ENCODE measurements at regions of chr2 and their contacts with region 1.

Region 1: DNA sequence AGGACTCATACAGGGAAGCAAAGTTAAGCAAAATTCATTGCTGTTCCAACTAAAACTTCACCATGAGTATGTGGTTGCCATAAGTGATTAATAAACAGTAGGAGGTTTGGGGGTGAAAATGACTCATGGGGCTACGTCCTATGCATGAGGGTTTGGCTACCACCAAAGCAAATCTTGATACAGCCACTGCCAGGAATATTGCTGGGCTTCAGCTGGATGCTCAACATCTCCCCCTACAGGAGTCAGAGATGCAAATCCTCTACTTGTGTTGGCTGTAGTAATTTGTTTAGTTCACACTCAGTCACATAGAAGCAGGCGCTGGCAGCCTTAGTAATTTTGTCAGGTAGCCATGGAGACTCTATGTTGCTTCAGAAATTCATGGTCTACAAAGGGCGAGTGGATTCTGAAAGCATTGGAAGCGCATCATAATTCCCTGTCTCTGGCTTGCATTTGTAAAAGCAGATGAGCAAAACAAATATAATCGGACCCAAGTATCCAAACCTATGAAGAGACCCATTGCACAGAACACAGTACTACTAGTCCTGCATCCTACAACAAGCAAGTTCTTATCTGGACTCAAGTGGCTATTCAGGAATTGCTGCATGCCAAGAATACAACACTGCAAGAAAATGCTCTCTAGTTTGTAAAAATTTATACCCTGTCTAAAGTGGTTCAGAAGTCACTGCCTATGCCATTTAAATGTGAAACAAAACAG is 76.0 kb downstream of the CD28 start:
- DNase-seq: peak in 8 of 9 donors; percentile 46 to 73 (median 64)
- ATAC-seq: peak; percentile 92
- H3K4me3 ChIP-seq: no peak overlapping the region
- H3K4me3 Mint-ChIP-seq: peak overlapping the region in 6 of 10 donors; percentile 39 to 63 (median 46)
- H3K27ac ChIP-seq: no peak overlapping the region
- H3K27ac Mint-ChIP-seq: peak overlapping the region; percentile 63 to 85 (median 81)
- H3K4me1 ChIP-seq: peaks cover 17 to 26% of the 10 kb centered on the region in 2 donors
- H3K4me1 Mint-ChIP-seq: peaks cover 11 to 64% (median 53%) of the 10 kb centered on the region in 7 donors
- H3K27me3 ChIP-seq: no peaks in the 10 kb centered on the region
- H3K27me3 Mint-ChIP-seq: no peaks in the 10 kb centered on the region

Region 2: GRCh38 chr2:203535078-203535783 is 247.2 kb before region 1 on chr2 and contains the start of gene RAPH1:
- CTCF ChIA-PET with region 1: no interaction called
- POLR2A ChIA-PET with region 1: interaction called, 3 read pairs
- intact Hi-C with region 1: loop called in 1 of 2 experiments (anchors 2 kb)
- DNase-seq: peak; percentile 24 to 72 (median 51)
- ATAC-seq: peak; percentile 77
- H3K4me3 ChIP-seq: peak within 1 kb of the TSS; percentile 71
- H3K4me3 Mint-ChIP-seq: peak within 1 kb of the TSS; percentile 79 to 95 (median 90)
- H3K27ac ChIP-seq: peak within 1 kb of the TSS; percentile 49
- H3K27ac Mint-ChIP-seq: peak within 1 kb of the TSS; percentile 32 to 90 (median 73)
- H3K4me1 ChIP-seq: peaks cover 10 to 15% of the 10 kb centered on the region in 2 donors
- H3K4me1 Mint-ChIP-seq: peaks cover 16 to 30% (median 28%) of the 10 kb centered on the region in 7 donors
- H3K27me3 ChIP-seq: no peaks in the 10 kb centered on the region
- H3K27me3 Mint-ChIP-seq: peaks cover 6 to 75% (median 16%) of the 10 kb centered on the region in 5 donors
- total RNA-seq, gene RAPH1: 1.8 to 5.5 (median 3.0) TPM

Region 3: DNA sequence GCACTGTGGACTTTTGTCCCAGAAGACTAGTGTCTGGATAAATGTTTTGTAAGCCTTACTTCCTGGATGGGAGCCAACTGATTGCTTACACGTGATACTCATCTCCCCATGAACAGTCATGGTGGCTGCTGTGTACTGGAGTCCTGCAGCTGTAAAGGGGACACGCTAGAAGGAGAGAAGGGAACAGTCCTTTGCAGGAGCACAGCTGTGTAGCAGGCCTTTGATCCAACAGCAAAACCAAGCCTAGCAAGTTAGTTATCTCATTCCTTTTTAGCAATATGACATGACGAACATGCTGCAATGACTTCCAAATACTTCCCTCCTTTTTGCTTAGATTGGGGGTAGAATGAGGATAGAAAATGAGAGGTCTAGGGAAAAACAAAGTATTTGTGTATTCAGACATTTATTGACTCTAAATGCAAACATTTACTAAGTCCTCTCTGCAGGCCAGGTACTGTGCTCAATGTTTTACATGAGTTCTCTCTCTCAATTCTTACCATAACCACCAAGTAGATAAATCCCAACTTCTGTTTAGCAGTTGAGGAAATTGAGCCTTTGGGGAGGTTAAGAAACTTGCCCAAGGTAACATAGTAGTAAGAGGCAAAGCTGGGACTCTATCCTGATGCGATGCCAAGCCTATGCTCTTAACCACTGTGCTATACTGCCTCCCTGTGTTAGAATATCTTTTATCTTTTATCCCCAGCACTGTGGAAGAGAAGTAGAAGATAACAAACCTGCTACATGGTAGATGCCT is 131.4 kb before region 1 on chr2:
- CTCF ChIA-PET with region 1: no interaction called
- POLR2A ChIA-PET with region 1: no interaction called
- intact Hi-C with region 1: loop called (anchors 5 kb)
- DNase-seq: peak in 4 of 9 donors; percentile 8 to 24 (median 12)
- ATAC-seq: peak; percentile 64
- H3K4me3 ChIP-seq: no peak overlapping the region
- H3K4me3 Mint-ChIP-seq: no peak overlapping the region
- H3K27ac ChIP-seq: no peak overlapping the region
- H3K27ac Mint-ChIP-seq: peak overlapping the region in 4 of 9 donors; percentile 5 to 48 (median 34)
- H3K4me1 ChIP-seq: no peaks in the 10 kb centered on the region
- H3K4me1 Mint-ChIP-seq: peaks cover 20 to 40% (median 29%) of the 10 kb centered on the region in 7 donors
- H3K27me3 ChIP-seq: no peaks in the 10 kb centered on the region
- H3K27me3 Mint-ChIP-seq: no peaks in the 10 kb centered on the region

Region 4: GRCh38 chr2:203730076-203730729 is 52.2 kb before region 1 on chr2:
- CTCF ChIA-PET with region 1: no interaction called
- POLR2A ChIA-PET with region 1: no interaction called
- intact Hi-C with region 1: loop called (anchors 2 kb)
- DNase-seq: no peak
- ATAC-seq: peak; percentile 39
- H3K4me3 ChIP-seq: no peak overlapping the region
- H3K4me3 Mint-ChIP-seq: peak overlapping the region in 9 of 10 donors; percentile 23 to 81 (median 67)
- H3K27ac ChIP-seq: peak overlapping the region; percentile 43
- H3K27ac Mint-ChIP-seq: peak overlapping the region; percentile 86 to 95 (median 90)
- H3K4me1 ChIP-seq: peaks cover 64 to 82% of the 10 kb centered on the region in 2 donors
- H3K4me1 Mint-ChIP-seq: peaks cover 45 to 96% (median 91%) of the 10 kb centered on the region in 7 donors
- H3K27me3 ChIP-seq: no peaks in the 10 kb centered on the region
- H3K27me3 Mint-ChIP-seq: no peaks in the 10 kb centered on the region

Region 5: GRCh38 chr2:203759690-203760365 is 22.6 kb before region 1 on chr2:
- CTCF ChIA-PET with region 1: interaction called, 3 read pairs
- POLR2A ChIA-PET with region 1: interaction called, 8 read pairs
- intact Hi-C with region 1: loop called in 1 of 2 experiments (anchors 2 kb)
- DNase-seq: no peak
- ATAC-seq: no peak
- H3K4me3 ChIP-seq: no peak overlapping the region
- H3K4me3 Mint-ChIP-seq: peak overlapping the region in 3 of 10 donors; percentile 5 to 11 (median 8)
- H3K27ac ChIP-seq: no peak overlapping the region
- H3K27ac Mint-ChIP-seq: peak overlapping the region in 5 of 9 donors; percentile 55 to 85 (median 64)
- H3K4me1 ChIP-seq: peaks cover 23 to 37% of the 10 kb centered on the region in 2 donors
- H3K4me1 Mint-ChIP-seq: peaks cover 22 to 75% (median 71%) of the 10 kb centered on the region in 7 donors
- H3K27me3 ChIP-seq: no peaks in the 10 kb centered on the region
- H3K27me3 Mint-ChIP-seq: no peaks in the 10 kb centered on the region

Region 6: DNA sequence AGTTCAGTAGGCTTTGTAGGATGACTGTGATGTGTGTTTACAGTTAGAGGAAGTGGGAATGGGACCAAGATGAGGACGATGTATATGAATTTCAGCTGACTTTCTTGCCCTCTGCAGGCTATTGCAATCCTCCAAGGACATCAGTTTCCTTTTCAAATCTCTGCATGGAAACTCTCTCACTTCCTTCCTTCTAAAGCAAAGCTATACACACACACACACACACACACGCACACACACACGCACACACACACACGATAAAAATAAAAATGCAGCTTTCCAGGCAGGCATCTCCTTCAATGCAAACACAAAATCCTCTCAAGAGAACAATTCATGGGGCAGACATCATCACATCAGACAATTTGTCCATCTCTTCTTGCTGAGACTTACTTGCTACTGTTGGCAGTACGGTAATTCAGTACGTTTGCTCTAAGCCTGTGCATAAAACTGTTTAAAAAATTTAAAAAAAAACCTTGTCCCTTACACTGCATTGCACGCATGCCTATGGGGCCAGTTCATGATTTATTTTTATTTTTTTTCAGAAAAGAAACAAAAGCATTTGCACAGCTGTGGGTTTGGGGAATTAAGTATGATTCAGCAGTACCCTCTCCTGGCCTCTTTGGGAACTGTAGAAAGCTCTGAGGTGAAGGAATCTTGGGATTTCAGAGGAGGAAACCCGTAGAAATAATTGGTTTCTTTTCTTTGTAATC is 127.0 kb after region 1 on chr2:
- CTCF ChIA-PET with region 1: interaction called, 4 read pairs
- POLR2A ChIA-PET with region 1: no interaction called
- intact Hi-C with region 1: loop called in 1 of 2 experiments (anchors 1 kb)
- DNase-seq: peak in 6 of 9 donors; percentile 42 to 61 (median 53)
- ATAC-seq: peak; percentile 82
- H3K4me3 ChIP-seq: no peak overlapping the region
- H3K4me3 Mint-ChIP-seq: peak overlapping the region in 8 of 10 donors; percentile 26 to 81 (median 64)
- H3K27ac ChIP-seq: no peak overlapping the region
- H3K27ac Mint-ChIP-seq: peak overlapping the region in 6 of 9 donors; percentile 8 to 71 (median 42)
- H3K4me1 ChIP-seq: peaks cover 0 to 7% of the 10 kb centered on the region in 2 donors
- H3K4me1 Mint-ChIP-seq: peaks cover 4 to 25% (median 8%) of the 10 kb centered on the region in 7 donors
- H3K27me3 ChIP-seq: no peaks in the 10 kb centered on the region
- H3K27me3 Mint-ChIP-seq: peaks cover 0 to 10% (median 0%) of the 10 kb centered on the region in 5 donors